Caco-2 (cell line): ENCODE measurements at regions of chr11 and their contacts with region 1.

Region 1: DNA sequence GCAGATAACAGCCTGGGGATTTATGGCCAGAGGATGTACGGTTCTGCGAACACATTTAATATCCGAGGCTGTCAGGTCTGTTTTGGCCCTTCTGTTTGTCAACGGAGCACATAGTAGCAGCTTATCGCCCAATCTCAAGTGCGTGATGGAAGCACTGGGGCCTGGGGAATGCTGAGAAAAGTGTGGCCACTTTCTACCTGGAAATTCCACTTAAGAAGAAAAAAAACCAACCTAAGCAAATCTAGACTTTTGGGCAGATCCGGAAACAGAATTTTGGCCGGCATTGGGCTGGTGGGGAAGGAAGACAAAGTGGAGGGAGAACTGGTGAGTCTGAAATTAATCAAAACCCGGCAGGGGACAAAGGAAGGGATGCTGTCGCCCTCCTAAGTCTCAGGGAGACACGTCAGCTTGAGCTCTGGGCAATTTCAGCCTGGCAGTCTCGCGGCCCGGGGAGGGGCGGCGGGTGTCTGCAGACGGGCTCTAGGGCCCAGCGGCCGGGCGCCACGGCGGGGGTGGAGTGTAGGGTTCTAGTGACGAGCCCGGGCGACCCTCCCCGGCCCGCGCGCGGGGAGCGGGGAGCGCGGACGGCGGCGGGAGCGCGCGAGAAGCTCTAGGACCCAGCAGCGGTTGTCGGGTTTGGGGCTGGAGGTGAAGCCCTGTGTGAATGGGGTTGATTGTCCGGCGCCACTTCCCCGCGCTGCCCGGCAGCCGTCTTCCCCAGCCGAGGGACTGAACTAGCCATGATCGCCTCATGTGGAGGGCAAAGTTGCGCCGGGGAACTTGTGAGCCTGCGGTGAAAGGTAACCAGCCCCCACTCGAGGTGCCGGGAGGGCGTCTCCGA is at the start of gene AMOTL1:
- DNase-seq: peak; percentile 95 to 96
- H3K4me3 ChIP-seq: peak within 1 kb of the TSS; percentile 75
- H3K4me3 Mint-ChIP-seq: no peak within 1 kb of the TSS
- H3K27ac Mint-ChIP-seq: peak within 1 kb of the TSS; percentile 84
- H3K4me1 ChIP-seq: peaks cover 38% of the 10 kb centered on the region
- H3K4me1 Mint-ChIP-seq: peaks cover 15% of the 10 kb centered on the region
- H3K27me3 ChIP-seq: no peaks in the 10 kb centered on the region
- H3K27me3 Mint-ChIP-seq: no peaks in the 10 kb centered on the region
- CTCF ChIP-seq: no peak
- total RNA-seq, gene AMOTL1: 60.8 and 64.6 TPM in 2 replicates

Region 2: DNA sequence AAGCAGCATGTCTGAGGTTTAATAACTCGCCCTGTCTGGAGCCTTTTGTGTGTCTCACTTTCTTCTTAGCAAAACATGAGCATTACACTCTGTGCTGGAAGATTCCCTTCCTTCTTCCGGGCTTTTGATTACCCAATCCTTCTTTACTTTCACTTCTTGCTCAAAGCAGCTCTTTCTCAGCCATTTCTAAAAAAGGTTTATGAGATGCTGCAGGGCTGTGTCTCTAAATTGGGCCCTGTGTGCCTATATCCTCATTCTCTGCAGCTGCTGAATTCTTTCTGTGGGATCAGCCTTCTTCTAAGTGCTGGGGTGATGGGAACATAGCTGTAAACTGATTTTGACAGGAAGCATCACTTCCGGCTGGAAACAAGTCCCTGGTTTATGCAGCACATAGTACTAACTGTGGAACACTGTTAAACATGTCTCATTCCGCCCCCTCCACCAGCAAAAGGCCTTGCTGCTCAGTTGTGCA is 129.0 kb before region 1 on chr11:
- CTCF ChIA-PET with region 1: no interaction called
- POLR2A ChIA-PET with region 1: no interaction called
- intact Hi-C with region 1: loop called (anchors 5 kb)
- DNase-seq: no peak
- H3K4me3 ChIP-seq: no peak overlapping the region
- H3K4me3 Mint-ChIP-seq: no peak overlapping the region
- H3K27ac Mint-ChIP-seq: no peak overlapping the region
- H3K4me1 ChIP-seq: peaks cover 29% of the 10 kb centered on the region
- H3K4me1 Mint-ChIP-seq: peaks cover 26% of the 10 kb centered on the region
- H3K27me3 ChIP-seq: no peaks in the 10 kb centered on the region
- H3K27me3 Mint-ChIP-seq: no peaks in the 10 kb centered on the region
- CTCF ChIP-seq: no peak

Region 3: DNA sequence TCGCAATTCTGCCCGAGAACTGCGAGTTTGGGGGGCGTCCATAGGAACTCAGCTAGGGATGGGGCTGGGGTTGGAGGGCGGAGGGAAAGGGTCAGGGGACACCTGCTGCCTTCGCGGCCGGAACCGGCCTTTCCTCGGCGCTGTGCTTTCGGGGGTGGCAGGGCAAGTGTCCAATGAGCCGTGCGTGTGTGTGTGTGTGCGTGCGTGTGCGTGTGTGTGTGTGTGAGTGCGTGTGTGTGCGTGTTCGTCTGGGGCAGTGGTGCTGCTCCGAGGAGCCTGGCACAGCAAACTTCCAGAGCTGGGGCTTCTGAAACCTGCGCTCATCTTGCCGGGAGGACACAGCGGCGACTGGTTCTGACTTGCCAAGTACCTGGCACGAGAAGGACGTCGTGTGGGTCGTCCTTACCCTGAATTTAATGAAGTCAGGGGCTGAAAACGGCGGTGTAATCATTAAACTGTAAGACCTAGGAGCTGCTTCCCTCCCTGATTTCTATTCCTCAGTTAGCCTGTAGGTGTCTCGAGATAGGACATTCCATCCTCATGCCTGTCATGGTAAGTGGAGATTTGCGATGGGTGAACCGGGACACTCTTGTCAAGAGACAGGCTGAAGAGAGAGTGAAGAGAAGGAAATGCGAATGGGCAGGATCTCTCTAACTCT is 26.8 kb before region 1 on chr11:
- CTCF ChIA-PET with region 1: interaction called, 3 read pairs
- POLR2A ChIA-PET with region 1: interaction called, 9 read pairs
- intact Hi-C with region 1: loop called (anchors 1 kb)
- DNase-seq: peak; percentile 64 to 69
- H3K4me3 ChIP-seq: no peak overlapping the region
- H3K4me3 Mint-ChIP-seq: no peak overlapping the region
- H3K27ac Mint-ChIP-seq: peak overlapping the region; percentile 48
- H3K4me1 ChIP-seq: peaks cover 54% of the 10 kb centered on the region
- H3K4me1 Mint-ChIP-seq: peaks cover 15% of the 10 kb centered on the region
- H3K27me3 ChIP-seq: no peaks in the 10 kb centered on the region
- H3K27me3 Mint-ChIP-seq: no peaks in the 10 kb centered on the region
- CTCF ChIP-seq: peak; percentile 49 to 64

Region 4: GRCh38 chr11:94897330-94897768 is 129.4 kb after region 1 on chr11:
- CTCF ChIA-PET with region 1: interaction called, 5 read pairs
- POLR2A ChIA-PET with region 1: no interaction called
- intact Hi-C with region 1: loop called (anchors 1 kb)
- DNase-seq: peak; percentile 69 to 76
- H3K4me3 ChIP-seq: no peak overlapping the region
- H3K4me3 Mint-ChIP-seq: no peak overlapping the region
- H3K27ac Mint-ChIP-seq: no peak overlapping the region
- H3K4me1 ChIP-seq: no peaks in the 10 kb centered on the region
- H3K4me1 Mint-ChIP-seq: no peaks in the 10 kb centered on the region
- H3K27me3 ChIP-seq: no peaks in the 10 kb centered on the region
- H3K27me3 Mint-ChIP-seq: no peaks in the 10 kb centered on the region
- CTCF ChIP-seq: peak; percentile 95 to 99